HepG2 (cell line): ENCODE measurements at regions of chr21 and their contacts with region 1.

Region 1: DNA sequence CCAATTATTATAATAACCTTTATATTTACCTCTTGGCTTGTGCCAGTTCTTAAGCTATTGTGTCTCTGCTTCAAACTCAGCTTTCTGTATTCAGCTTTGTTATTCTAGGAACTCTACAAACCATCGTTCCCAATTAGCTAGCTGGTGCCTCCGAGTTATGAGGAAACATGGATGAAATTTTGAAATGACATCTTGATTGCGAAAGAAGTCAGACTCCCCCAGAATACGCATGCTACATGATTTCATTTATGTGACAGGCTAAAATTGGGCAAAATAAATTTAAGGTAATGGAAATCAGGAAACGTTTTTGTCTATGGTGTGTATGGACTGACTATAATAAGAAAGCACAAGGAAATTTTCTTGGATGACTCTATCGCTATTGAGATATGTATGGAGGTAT is 256.8 kb upstream of the NCAM2 start:
- DNase-seq: no peak
- ATAC-seq: no peak
- H3K4me3 ChIP-seq: no peak overlapping the region
- H3K27ac ChIP-seq: no peak overlapping the region
- H3K4me1 ChIP-seq: no peaks in the 10 kb centered on the region
- H3K27me3 ChIP-seq: no peaks in the 10 kb centered on the region
- CTCF ChIP-seq: no peak
- EP300 ChIP-seq: no peak
- POLR2A ChIP-seq: no peak
- RAD21 ChIP-seq: no peak

Region 2: DNA sequence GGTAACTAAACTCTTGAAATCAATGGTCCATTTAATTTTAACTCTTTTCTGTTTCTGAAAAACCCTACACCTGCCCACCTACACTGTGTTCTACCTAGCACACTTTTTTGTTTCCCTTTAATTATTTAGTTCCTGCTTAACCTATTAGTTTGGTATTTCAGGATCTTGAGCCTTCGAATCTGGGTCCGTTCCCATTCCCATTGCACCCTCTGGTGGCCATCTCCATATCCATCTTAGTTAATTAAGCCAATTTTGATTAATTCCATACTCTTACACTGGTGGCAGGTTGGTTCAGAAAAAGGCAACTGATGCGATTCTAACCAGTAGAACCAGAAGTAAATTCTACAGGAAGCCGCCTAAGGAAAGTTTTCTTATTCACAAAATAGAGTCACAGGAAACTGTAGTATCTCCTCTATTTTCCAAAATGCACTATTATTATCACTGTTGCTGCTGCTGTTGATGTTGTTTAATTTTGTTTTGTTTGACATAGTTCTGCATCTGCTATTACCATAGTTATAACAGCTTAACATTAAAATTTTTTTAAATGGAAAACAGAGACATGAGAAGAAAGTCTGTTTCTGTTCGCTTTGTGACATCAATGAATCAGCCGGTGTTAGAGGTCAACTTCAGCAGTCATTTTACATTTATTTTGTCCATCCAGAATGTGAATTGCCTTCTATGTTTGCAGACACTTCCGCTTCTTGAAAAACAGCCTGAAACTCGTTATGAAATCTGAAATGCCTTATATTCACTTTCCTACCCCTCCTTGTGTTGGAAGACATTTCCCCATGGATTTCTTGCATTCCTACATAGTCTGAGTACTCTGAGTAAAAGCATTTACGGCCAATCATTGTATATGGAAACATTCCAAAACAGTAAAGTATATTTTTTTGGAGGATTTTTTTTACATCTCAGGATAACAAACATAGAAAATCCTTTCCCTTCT is 141.3 kb after region 1 on chr21:
- CTCF ChIA-PET with region 1: no interaction called
- POLR2A ChIA-PET with region 1: no interaction called
- in situ Hi-C with region 1: no loop called
- intact Hi-C with region 1: loop called (anchors 5 kb)
- DNase-seq: no peak
- ATAC-seq: no peak
- H3K4me3 ChIP-seq: no peak overlapping the region
- H3K27ac ChIP-seq: no peak overlapping the region
- H3K4me1 ChIP-seq: no peaks in the 10 kb centered on the region
- H3K27me3 ChIP-seq: no peaks in the 10 kb centered on the region
- CTCF ChIP-seq: peak; percentile 17; the same call in 1 of the 2 replicates
- EP300 ChIP-seq: no peak
- POLR2A ChIP-seq: no peak
- RAD21 ChIP-seq: no peak